ENCODE measurements at regions of chr5 and their contacts with region 1.

Region 1: DNA sequence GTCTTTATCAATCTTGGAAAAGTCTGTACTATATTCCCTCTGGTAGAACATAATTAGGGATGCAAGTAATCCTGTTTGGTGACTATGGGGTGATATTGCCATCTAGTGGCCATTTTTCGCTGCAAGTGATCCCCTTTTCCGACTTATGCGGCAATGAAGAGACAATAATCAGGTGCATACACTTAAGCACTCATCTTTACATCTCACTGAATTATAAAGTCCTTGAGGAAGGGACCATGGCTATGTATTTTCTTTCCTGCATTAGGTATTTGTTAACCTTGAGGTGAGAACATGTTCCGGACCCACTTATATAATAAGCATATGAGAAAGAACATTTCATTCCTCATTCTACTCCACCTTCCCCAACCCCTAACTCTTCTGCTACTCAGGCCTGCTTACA is 19.6 kb upstream of the LIX1 start:
- DNase-seq: peak; percentile 70
- ATAC-seq: peak; percentile 35
- H3K4me3 Mint-ChIP-seq: no peak overlapping the region
- H3K27ac Mint-ChIP-seq: no peak overlapping the region
- H3K4me1 Mint-ChIP-seq: peaks cover 15% of the 10 kb centered on the region
- H3K27me3 Mint-ChIP-seq: no peaks in the 10 kb centered on the region
- CTCF ChIP-seq: peak; percentile 95

Region 2: GRCh38 chr5:96771395-96771794 is 390.6 kb before region 1 on chr5:
- CTCF ChIA-PET with region 1: interaction called, 12 read pairs
- POLR2A ChIA-PET with region 1: no interaction called
- intact Hi-C with region 1: no loop called
- DNase-seq: no peak
- ATAC-seq: peak; percentile 81
- H3K4me3 Mint-ChIP-seq: no peak overlapping the region
- H3K27ac Mint-ChIP-seq: peak overlapping the region; percentile 72
- H3K4me1 Mint-ChIP-seq: peaks cover 16% of the 10 kb centered on the region
- H3K27me3 Mint-ChIP-seq: no peaks in the 10 kb centered on the region
- CTCF ChIP-seq: no peak

Region 3: GRCh38 chr5:96868603-96869371 is 293.3 kb before region 1 on chr5:
- CTCF ChIA-PET with region 1: interaction called, 213 read pairs
- POLR2A ChIA-PET with region 1: interaction called, 3 read pairs
- intact Hi-C with region 1: loop called (anchors 2 kb)
- DNase-seq: peak; percentile 34
- ATAC-seq: peak; percentile 88
- H3K4me3 Mint-ChIP-seq: no peak overlapping the region
- H3K27ac Mint-ChIP-seq: peak overlapping the region; percentile 87
- H3K4me1 Mint-ChIP-seq: peaks cover 44% of the 10 kb centered on the region
- H3K27me3 Mint-ChIP-seq: no peaks in the 10 kb centered on the region
- CTCF ChIP-seq: peak; percentile 87

Region 4: DNA sequence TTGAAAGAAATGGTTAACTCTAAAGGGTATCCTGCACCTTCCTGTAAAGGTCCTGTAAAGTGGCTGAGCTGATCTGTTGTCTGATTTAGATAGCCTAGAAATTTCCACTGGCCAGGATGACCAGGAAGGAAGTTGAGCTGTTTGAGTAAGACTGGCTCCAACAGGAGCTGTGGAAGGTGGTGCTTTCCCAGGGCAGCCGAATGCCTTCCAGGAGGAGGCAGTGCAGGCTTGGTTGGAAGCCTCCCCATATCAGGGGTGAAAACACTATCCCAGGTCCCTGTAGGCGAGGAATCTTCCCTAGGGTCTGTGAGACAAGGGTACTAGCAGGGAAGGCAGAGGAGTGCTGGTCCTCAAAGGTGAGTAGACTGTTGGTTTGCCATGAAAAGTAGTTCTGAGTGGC is 118.0 kb before region 1 on chr5:
- CTCF ChIA-PET with region 1: interaction called, 20 read pairs
- POLR2A ChIA-PET with region 1: no interaction called
- intact Hi-C with region 1: no loop called
- DNase-seq: no peak
- ATAC-seq: no peak
- H3K4me3 Mint-ChIP-seq: no peak overlapping the region
- H3K27ac Mint-ChIP-seq: no peak overlapping the region
- H3K4me1 Mint-ChIP-seq: no peaks in the 10 kb centered on the region
- H3K27me3 Mint-ChIP-seq: no peaks in the 10 kb centered on the region
- CTCF ChIP-seq: no peak

Region 5: DNA sequence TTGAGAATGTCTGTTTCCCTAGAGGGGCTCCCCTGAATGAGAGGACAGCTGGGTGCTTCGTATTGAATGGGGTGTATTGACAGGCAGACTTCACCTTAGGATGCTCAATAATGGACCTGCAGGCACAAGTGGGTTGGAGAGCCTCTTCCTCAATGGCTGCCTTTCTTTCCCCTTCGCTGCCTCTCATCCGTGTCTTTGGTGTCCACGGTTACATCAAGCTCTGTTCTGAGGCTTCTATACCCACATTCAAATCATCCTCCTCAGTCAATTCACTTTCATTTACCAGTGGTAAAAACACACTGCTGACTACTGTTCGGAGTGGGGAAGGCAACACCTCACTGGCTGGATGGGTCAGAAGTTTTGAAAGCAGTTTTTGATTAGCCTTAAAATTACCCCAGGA is 40.2 kb before region 1 on chr5:
- CTCF ChIA-PET with region 1: interaction called, 10 read pairs
- POLR2A ChIA-PET with region 1: no interaction called
- intact Hi-C with region 1: no loop called
- DNase-seq: no peak
- ATAC-seq: no peak
- H3K4me3 Mint-ChIP-seq: no peak overlapping the region
- H3K27ac Mint-ChIP-seq: no peak overlapping the region
- H3K4me1 Mint-ChIP-seq: no peaks in the 10 kb centered on the region
- H3K27me3 Mint-ChIP-seq: peaks cover 3% of the 10 kb centered on the region
- CTCF ChIP-seq: no peak

Region 6: DNA sequence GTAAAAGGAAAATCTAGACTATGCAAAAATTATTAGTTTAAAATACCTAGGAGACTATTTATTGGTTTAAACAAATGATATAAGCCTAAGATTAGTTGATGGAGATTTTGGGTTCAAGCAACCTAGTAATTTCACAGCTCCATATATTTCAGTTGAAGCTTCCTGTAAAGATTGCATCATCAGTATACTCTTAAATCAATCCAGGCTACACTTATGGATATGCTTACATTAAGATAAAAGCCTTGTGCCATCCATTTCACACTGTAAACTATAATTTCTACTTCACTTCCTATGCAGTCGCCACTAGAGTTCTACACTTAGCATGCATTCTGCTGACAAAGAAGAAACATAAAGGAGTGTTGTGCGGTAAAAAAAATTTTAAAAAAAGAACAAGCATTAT is 12.3 kb before region 1 on chr5:
- CTCF ChIA-PET with region 1: interaction called, 83 read pairs
- POLR2A ChIA-PET with region 1: no interaction called
- intact Hi-C with region 1: no loop called
- DNase-seq: no peak
- ATAC-seq: no peak
- H3K4me3 Mint-ChIP-seq: no peak overlapping the region
- H3K27ac Mint-ChIP-seq: no peak overlapping the region
- H3K4me1 Mint-ChIP-seq: no peaks in the 10 kb centered on the region
- H3K27me3 Mint-ChIP-seq: no peaks in the 10 kb centered on the region
- CTCF ChIP-seq: no peak

Region 7: GRCh38 chr5:97276474-97277120 is 114.6 kb after region 1 on chr5:
- CTCF ChIA-PET with region 1: no interaction called
- POLR2A ChIA-PET with region 1: no interaction called
- intact Hi-C with region 1: no loop called
- DNase-seq: no peak
- ATAC-seq: no peak
- H3K4me3 Mint-ChIP-seq: no peak overlapping the region
- H3K27ac Mint-ChIP-seq: no peak overlapping the region
- H3K4me1 Mint-ChIP-seq: no peaks in the 10 kb centered on the region
- H3K27me3 Mint-ChIP-seq: no peaks in the 10 kb centered on the region
- CTCF ChIP-seq: no peak

Measured in activated CD8-positive, alpha-beta T cell treated with anti-CD3 and anti-CD28 coated beads for 36 hours (primary cell).